Activated CD8-positive, alpha-beta T cell treated with anti-CD3 and anti-CD28 coated beads, Interleukin-2, amount 10 ng/mL, durations not matched to agents 7 days and 5 days (primary cell): ENCODE measurements at regions of chr4 and their contacts with region 1.

Region 1: GRCh38 chr4:80215449-80216052 is 18.2 kb downstream of the PRDM8 start:
- DNase-seq: no peak
- ATAC-seq: no peak
- H3K4me3 Mint-ChIP-seq: no peak overlapping the region
- H3K27ac Mint-ChIP-seq: no peak overlapping the region
- H3K4me1 Mint-ChIP-seq: peaks cover 1% of the 10 kb centered on the region
- H3K27me3 Mint-ChIP-seq: peaks cover 37% of the 10 kb centered on the region

Region 2: DNA sequence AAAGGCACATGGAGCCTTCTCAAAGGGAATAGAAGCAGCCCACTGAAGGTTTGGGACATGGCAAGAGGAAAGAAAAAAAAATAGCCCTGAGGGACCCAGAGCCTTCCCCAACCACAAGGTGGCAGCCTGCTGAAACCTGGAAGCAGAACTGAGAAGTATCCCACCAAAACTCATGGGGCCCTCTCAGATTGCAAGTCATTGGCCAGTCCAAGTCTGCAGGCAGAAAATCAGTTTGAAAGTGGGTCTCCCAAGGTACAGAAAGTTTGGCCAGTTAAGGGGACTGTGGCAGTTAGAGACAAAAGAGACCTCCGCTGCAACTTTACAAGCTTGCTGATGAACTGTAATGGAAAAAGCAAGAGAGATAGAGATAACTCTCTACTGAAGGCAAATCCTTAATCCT is 298.3 kb before region 1 on chr4:
- CTCF ChIA-PET with region 1: interaction called, 14 read pairs
- POLR2A ChIA-PET with region 1: no interaction called
- DNase-seq: peak; percentile 68
- ATAC-seq: peak; percentile 76
- H3K4me3 Mint-ChIP-seq: no peak overlapping the region
- H3K27ac Mint-ChIP-seq: no peak overlapping the region
- H3K4me1 Mint-ChIP-seq: peaks cover 13% of the 10 kb centered on the region
- H3K27me3 Mint-ChIP-seq: no peaks in the 10 kb centered on the region

Region 3: DNA sequence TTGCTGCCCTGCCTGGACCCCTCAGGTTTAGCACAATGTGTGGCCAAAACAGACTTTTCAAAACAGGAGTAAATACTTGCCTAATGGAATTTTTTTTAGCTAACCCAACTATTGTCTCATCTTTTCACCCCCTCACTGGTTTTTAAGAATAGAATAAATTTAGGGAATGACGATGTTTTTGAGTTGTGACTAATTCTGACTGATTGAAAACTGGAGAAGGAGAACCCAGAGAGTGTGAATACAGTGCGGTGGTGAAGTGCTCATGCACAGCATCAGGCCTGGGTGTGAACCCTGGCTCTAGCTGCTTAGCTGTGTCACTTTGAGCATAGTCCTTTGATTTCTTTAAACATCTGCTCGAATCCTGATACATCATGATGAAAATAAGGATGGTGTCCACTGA is 153.0 kb before region 1 on chr4:
- CTCF ChIA-PET with region 1: no interaction called
- POLR2A ChIA-PET with region 1: no interaction called
- DNase-seq: no peak
- ATAC-seq: no peak
- H3K4me3 Mint-ChIP-seq: no peak overlapping the region
- H3K27ac Mint-ChIP-seq: no peak overlapping the region
- H3K4me1 Mint-ChIP-seq: peaks cover 27% of the 10 kb centered on the region
- H3K27me3 Mint-ChIP-seq: no peaks in the 10 kb centered on the region